ENCODE measurements at regions of chr2 and their contacts with region 1.

Region 1: GRCh38 chr2:241877989-241878970 is 8.8 kb downstream of the RTP5 start:
- DNase-seq: peak; percentile 73
- ATAC-seq: no peak
- H3K4me3 Mint-ChIP-seq: no peak overlapping the region
- H3K27ac Mint-ChIP-seq: no peak overlapping the region
- H3K4me1 Mint-ChIP-seq: peaks cover 28% of the 10 kb centered on the region
- H3K27me3 Mint-ChIP-seq: no peaks in the 10 kb centered on the region
- CTCF ChIP-seq: no peak

Region 2: GRCh38 chr2:240136013-240136670 is 1742.1 kb before region 1 on chr2 and contains the start of gene COPS9:
- CTCF ChIA-PET with region 1: no interaction called
- POLR2A ChIA-PET with region 1: no interaction called
- intact Hi-C with region 1: loop called (anchors 10 kb)
- DNase-seq: peak; percentile 87
- ATAC-seq: peak; percentile 94
- H3K4me3 Mint-ChIP-seq: peak within 1 kb of the TSS; percentile 88
- H3K27ac Mint-ChIP-seq: peak within 1 kb of the TSS; percentile 56
- H3K4me1 Mint-ChIP-seq: peaks cover 27% of the 10 kb centered on the region
- H3K27me3 Mint-ChIP-seq: peaks cover 5% of the 10 kb centered on the region
- CTCF ChIP-seq: no peak
- total RNA-seq, gene COPS9: 78.6 and 81.1 TPM in 2 replicates

Region 3: GRCh38 chr2:241257417-241258032 is 620.8 kb before region 1 on chr2:
- CTCF ChIA-PET with region 1: no interaction called
- POLR2A ChIA-PET with region 1: no interaction called
- intact Hi-C with region 1: loop called (anchors 10 kb)
- DNase-seq: no peak
- ATAC-seq: no peak
- H3K4me3 Mint-ChIP-seq: no peak overlapping the region
- H3K27ac Mint-ChIP-seq: no peak overlapping the region
- H3K4me1 Mint-ChIP-seq: no peaks in the 10 kb centered on the region
- H3K27me3 Mint-ChIP-seq: no peaks in the 10 kb centered on the region
- CTCF ChIP-seq: no peak

Region 4: DNA sequence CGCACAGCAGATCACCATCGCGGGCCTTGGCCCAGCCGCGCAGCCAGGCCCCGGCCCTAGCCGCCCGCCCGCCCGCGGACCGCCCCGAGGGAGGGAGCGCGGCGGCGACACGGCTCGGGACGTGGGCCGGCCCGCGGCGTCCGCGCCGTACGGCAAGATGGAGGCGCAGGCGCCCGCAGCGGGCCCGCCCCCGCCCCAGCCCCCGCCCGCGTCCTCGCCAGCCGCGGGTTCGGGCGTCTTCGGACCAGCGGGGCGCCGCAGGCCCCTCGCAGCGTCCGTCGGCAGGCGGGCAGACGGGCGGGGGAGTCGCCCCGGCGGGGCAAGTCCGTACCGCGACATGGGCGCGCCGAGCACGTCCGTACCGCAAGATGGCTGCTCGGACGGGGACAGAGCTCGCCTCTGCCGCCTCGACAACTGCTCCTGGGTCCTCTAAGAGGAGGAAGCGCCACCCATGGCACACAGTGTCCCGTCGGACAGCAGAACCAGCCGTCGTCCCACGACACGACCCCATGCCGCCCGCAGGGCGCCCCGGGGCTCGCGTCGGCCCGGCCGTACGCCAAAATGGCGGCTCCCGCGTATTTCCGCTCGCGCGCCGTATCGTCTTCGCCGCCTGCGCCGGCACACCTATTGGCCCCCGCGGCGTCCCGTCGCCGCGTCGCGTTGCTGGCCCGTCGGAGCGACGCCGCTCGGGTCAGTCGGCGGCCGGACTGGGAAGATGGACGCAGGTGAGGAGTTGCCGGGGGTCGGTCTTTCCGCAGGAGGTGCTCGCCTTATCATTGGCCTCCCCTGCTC is 241.1 kb before region 1 on chr2 and contains the starts of genes ATG4B and THAP4:
- CTCF ChIA-PET with region 1: no interaction called
- POLR2A ChIA-PET with region 1: no interaction called
- intact Hi-C with region 1: loop called (anchors 1 kb)
- DNase-seq: peak; percentile 84
- ATAC-seq: peak; percentile 72
- H3K4me3 Mint-ChIP-seq: peak within 1 kb of the TSS; percentile 91
- H3K27ac Mint-ChIP-seq: peak within 1 kb of the TSS; percentile 83
- H3K4me1 Mint-ChIP-seq: peaks cover 45% of the 10 kb centered on the region
- H3K27me3 Mint-ChIP-seq: no peaks in the 10 kb centered on the region
- CTCF ChIP-seq: no peak
- total RNA-seq, gene ATG4B: 92.6 and 101 TPM in 2 replicates
- total RNA-seq, gene THAP4: 23.7 and 26.7 TPM in 2 replicates

Region 5: DNA sequence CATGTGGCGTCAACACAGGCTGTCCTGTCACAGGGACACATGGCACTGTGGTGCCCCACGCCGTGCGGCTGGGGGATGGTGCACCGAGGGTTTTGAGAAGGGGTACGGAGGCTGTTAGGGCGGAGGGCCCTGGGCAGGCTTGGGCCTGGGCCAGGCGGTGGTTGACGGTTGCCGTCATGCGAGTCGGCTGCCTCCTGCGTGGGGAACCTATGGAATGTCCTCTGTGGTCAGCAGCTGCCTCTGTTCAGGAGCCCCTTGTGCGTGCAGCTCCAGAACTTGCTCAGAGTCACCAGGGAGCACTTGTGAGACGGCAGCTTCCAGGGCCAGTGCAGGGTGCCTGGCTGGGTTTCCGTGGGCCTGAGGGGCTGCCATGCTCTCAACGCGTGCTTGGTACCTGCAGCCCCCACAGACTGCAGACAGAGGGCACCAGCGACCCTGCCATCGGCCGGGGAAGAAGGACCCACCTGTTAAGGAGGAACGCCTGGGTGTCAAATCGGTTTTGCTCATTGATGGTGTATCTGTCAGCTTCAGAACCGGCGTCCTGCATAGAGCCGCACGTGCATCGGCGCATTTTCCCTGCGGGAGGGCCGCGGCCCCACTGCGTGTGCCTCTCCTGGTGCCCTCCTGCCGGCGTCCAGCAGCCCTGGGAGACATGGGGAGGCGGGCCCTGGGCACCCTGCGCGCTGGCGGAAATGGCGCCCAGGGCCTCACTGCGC is 153.9 kb before region 1 on chr2:
- CTCF ChIA-PET with region 1: interaction called, 7 read pairs
- POLR2A ChIA-PET with region 1: no interaction called
- intact Hi-C with region 1: loop called (anchors 2 kb)
- DNase-seq: no peak
- ATAC-seq: peak; percentile 52
- H3K4me3 Mint-ChIP-seq: no peak overlapping the region
- H3K27ac Mint-ChIP-seq: no peak overlapping the region
- H3K4me1 Mint-ChIP-seq: peaks cover 2% of the 10 kb centered on the region
- H3K27me3 Mint-ChIP-seq: no peaks in the 10 kb centered on the region
- CTCF ChIP-seq: no peak

Region 6: GRCh38 chr2:241859436-241860183 is 18.7 kb before region 1 on chr2:
- CTCF ChIA-PET with region 1: no interaction called
- POLR2A ChIA-PET with region 1: no interaction called
- intact Hi-C with region 1: loop called (anchors 1 kb)
- DNase-seq: peak; percentile 55
- ATAC-seq: peak; percentile 62
- H3K4me3 Mint-ChIP-seq: peak overlapping the region; percentile 79
- H3K27ac Mint-ChIP-seq: peak overlapping the region; percentile 91
- H3K4me1 Mint-ChIP-seq: peaks cover 41% of the 10 kb centered on the region
- H3K27me3 Mint-ChIP-seq: peaks cover 26% of the 10 kb centered on the region
- CTCF ChIP-seq: no peak

Measured in activated B cell treated with CpG ODN at 0.5 μM for 24 hours (primary cell).